Activated CD4-positive, alpha-beta T cell treated with anti-CD3 and anti-CD28 coated beads, Interleukin-2, amount 10 ng/mL, durations not matched to agents 24 days and 14 days (primary cell): ENCODE measurements at regions of chr15 and their contacts with region 1.

Region 1: GRCh38 chr15:51380999-51381795 is 39.7 kb downstream of the GLDN start:
- DNase-seq: peak; percentile 75
- H3K4me3 Mint-ChIP-seq: no peak overlapping the region
- H3K27ac Mint-ChIP-seq: no peak overlapping the region
- H3K4me1 Mint-ChIP-seq: no peaks in the 10 kb centered on the region
- H3K27me3 Mint-ChIP-seq: peaks cover 6% of the 10 kb centered on the region

Region 2: DNA sequence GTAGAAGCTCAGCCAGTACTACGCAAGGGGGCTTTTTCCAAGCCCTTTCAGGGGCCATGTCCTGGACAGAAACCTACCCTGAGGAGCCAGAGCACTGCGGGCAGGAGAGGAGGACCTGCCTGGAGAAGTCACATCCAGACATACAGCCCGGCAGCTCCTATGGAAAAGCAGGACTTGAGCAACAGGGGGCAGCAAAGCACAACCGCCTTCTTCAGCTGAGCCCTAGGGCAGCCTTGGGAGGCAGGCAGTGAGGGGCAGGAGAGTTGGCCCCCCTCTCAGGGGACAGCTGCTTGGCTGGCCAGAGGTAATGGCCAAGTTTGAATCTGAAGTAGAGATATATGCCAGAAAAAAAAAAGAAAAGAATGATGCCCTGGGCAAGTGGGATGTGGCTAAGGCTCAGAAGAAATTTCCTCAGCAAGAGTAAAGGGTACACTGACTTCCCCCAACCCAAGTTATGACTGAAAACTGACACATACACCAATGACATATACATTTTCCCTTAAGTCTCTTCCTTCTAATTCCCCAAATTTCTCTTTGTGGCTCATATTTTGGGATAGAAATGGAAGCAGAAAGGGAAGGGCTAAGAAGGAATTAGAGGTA is 99.7 kb before region 1 on chr15:
- intact Hi-C with region 1: loop called (anchors 5 kb)
- DNase-seq: peak; percentile 69
- H3K4me3 Mint-ChIP-seq: no peak overlapping the region
- H3K27ac Mint-ChIP-seq: no peak overlapping the region
- H3K4me1 Mint-ChIP-seq: peaks cover 10% of the 10 kb centered on the region
- H3K27me3 Mint-ChIP-seq: peaks cover 15% of the 10 kb centered on the region

Region 3: DNA sequence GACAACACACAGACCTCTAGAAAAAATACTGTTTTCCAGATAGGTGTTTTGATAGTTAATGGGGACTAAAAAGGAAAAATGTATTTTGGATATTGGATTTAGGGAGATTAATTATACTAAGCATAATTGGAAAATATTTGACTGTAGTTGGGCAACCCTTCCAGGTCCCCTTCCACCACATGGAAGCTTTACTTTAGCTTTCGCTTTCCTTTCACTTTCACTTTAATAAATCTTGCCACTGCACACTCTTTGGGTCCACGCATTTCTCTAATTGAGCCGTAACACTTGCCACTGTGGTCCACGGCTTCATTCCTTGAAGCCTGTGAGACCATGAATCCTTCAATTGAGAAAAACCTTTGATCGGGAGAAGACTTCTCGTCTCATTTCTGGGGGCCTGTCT is 24.2 kb before region 1 on chr15:
- intact Hi-C with region 1: no loop called
- DNase-seq: no peak
- H3K4me3 Mint-ChIP-seq: no peak overlapping the region
- H3K27ac Mint-ChIP-seq: no peak overlapping the region
- H3K4me1 Mint-ChIP-seq: peaks cover 4% of the 10 kb centered on the region
- H3K27me3 Mint-ChIP-seq: peaks cover 2% of the 10 kb centered on the region